ENCODE measurements at regions of chr11 and their contacts with region 1.

Region 1: DNA sequence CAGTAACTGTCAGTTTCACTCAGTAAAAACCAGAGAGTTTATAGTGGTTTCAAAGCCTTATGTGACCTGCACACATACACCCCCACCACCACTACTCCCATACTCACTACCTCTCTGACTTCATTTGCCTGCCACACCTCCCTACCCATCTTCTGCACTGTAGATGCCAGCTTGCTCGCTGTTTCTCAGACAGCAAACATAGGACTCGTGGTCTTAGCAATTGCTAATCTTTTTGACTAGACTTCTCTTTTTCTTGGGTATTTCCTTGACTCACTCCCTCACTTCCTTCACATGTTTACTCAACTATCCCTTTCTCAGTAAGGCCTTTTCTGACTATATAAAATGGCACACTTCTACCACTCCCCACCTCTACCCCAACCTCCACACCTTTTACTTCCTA is 27.8 kb downstream of the CEP295 start:
- DNase-seq: no peak
- H3K4me3 ChIP-seq: no peak overlapping the region
- H3K27ac ChIP-seq: no peak overlapping the region
- H3K4me1 ChIP-seq: no peaks in the 10 kb centered on the region
- H3K27me3 ChIP-seq: no peaks in the 10 kb centered on the region
- CTCF ChIP-seq: no peak
- POLR2A ChIP-seq: no peak

Region 2: GRCh38 chr11:93741094-93741881 is 52.0 kb after region 1 on chr11 and contains the starts of genes C11orf54 and TAF1D:
- intact Hi-C with region 1: loop called in 1 of 2 experiments (anchors 10 kb)
- DNase-seq: peak; percentile 98 to 99 (median 98)
- H3K4me3 ChIP-seq: peak within 1 kb of the TSS; percentile 19 to 69 (median 60)
- H3K27ac ChIP-seq: peak within 1 kb of the TSS; percentile 87 to 96 (median 92)
- H3K4me1 ChIP-seq: peaks cover 9 to 52% of the 10 kb centered on the region in 2 donors
- H3K27me3 ChIP-seq: no peaks in the 10 kb centered on the region
- CTCF ChIP-seq: peak in 3 of 6 experiments; percentile 18 to 39 (median 29)
- POLR2A ChIP-seq: peak; percentile 87
- total RNA-seq, gene C11orf54: 28.7 to 68.2 (median 38.6) TPM
- total RNA-seq, gene TAF1D: 20.8 to 109 (median 55.0) TPM

Region 3: DNA sequence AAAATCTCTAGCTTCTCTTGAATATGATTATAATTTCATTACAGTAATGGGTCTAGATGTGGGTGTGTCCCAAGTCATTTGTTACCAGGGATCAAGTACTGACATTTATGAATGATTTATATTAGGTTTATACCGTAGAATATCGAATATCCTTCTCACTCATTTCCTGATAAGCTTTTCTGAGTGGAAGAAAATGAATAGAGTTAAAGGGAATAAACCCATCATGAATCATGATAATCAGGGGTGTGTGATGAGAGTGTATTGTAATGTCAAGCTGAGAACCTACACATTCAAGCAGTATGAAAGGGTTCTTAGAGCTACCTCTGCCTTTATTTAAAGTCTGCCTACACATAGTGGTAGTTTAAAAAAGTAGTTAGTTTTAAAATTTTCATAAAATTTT is 112.1 kb after region 1 on chr11:
- intact Hi-C with region 1: loop called in 1 of 2 experiments (anchors 10 kb)
- DNase-seq: no peak
- H3K4me3 ChIP-seq: no peak overlapping the region
- H3K27ac ChIP-seq: no peak overlapping the region
- H3K4me1 ChIP-seq: peaks cover 0 to 10% of the 10 kb centered on the region in 2 donors
- H3K27me3 ChIP-seq: no peaks in the 10 kb centered on the region
- CTCF ChIP-seq: no peak
- POLR2A ChIP-seq: no peak

Measured in adrenal gland (tissue), 19 donors.